ENCODE measurements at regions of chr1 and their contacts with region 1.

Region 1: DNA sequence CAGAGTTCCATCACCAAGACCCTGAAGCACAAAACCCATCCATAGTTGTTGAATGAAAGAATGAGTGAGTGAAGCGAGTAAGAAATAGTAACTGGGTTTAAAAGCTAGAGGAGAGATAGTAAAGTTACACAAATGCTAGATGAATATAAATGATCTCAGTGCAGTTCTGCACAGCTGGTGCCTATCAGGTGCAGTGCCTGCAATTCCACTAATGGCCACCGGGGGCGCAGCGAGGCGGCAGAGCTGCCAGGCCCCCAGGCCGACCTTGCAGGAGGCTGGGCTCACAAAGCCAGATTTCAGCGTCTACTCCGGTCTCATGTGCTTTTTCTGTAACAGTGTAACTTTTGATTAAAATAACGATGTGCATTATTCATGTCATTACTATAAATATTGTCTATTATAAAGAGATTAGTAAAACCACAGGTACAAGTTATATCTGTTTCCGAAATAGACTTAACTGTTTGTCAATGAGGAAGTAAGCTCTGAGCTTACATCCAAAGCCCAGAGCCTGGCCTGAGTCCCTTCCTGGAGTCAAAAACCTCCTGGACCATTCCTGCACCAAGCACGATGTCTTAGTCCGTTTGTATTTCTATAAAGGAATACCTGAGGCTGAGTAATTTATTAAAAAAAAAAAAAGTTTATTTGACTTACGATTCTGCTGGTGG is 477.6 kb downstream of the NPHP4 start:
- DNase-seq: peak; percentile 61 to 76
- ATAC-seq: peak in 4 of 8 donors; percentile 50 to 74 (median 63)
- H3K4me3 ChIP-seq: no peak overlapping the region
- H3K27ac ChIP-seq: no peak overlapping the region
- H3K4me1 ChIP-seq: no peaks in the 10 kb centered on the region
- H3K27me3 ChIP-seq: peaks cover 0 to 60% (median 36%) of the 10 kb centered on the region in 7 donors
- CTCF ChIP-seq: peak in 8 of 9 donors; percentile 98 to 100 (median 100)

Region 2: DNA sequence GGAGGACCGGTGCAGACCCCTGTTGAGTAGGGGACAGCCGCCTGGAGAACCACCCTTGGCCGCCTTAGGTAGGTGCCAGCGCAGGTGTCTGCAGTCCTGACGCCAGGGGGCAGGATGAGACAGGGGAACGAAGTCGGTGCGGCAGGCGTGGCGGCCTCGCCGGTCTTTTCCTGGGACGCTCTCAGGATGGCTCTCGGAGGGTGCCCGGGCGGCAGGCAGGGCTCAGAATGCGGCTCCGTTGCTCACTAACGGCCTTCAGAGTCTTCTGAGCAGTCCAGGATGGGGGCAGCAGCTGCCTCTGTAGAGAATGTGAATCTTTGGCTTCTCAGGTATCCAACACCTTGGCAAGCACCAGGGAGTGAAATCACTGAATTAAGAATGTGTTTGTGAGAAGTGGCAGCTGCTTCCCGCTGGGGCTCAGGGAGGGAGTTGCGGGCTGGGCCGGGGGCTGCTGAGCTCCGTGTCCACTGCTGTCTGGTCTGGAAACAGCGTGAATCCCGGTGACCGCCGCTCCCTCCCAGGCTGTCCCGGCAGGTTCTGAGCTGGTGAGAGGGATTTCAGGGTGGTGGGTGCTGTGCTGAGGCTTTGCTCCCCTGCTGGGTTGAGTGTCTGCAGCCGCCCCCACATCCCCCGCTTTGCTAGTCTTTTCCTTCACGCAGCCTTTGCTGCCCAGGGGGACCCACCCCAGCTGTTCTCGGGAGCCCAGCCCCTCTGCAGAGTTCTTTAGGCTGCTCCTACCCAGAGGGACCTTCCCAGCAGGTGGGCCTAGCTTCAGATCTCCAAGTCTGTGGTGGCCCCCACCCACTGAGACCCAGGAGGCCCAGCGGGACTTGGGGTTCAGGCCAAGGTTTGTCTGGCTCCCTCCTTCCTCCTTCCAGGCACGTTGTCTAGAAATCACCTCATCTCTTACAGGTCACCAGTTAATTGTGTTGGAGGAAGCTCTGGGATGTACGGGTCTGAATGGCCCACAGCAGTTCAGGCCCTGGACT is 1603.5 kb before region 1 on chr1:
- intact Hi-C with region 1: loop called in 1 of 10 experiments (anchors 10 kb)
- DNase-seq: peak; percentile 52 to 70
- ATAC-seq: peak in 7 of 8 donors; percentile 41 to 79 (median 72)
- H3K4me3 ChIP-seq: no peak overlapping the region
- H3K27ac ChIP-seq: no peak overlapping the region
- H3K4me1 ChIP-seq: peaks cover 0 to 5% (median 0%) of the 10 kb centered on the region in 9 donors
- H3K27me3 ChIP-seq: peaks cover 0 to 44% (median 30%) of the 10 kb centered on the region in 7 donors
- CTCF ChIP-seq: peak; percentile 34 to 75 (median 70)

Region 3: DNA sequence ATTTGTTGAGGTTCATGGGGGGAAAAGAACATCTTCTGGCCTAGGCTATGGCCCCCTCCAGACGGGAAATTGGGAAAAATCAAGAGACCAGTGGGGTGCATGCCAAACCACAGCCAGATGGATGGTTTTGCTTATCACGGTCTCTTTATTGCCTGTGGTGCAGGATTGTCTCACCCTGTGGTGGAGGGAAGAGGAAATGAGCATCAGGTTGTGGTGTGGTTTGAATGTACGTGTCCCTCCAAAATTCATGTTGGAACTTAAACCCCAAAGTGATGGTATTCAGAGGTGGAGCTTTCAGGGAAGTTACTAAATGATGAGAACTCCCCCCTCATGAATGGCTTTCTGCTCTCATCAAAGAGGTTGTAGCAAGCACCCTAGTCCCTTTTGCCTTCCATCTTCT is 48.2 kb before region 1 on chr1:
- intact Hi-C with region 1: no loop called
- DNase-seq: no peak
- ATAC-seq: no peak
- H3K4me3 ChIP-seq: no peak overlapping the region
- H3K27ac ChIP-seq: no peak overlapping the region
- H3K4me1 ChIP-seq: no peaks in the 10 kb centered on the region
- H3K27me3 ChIP-seq: peaks cover 0 to 13% (median 6%) of the 10 kb centered on the region in 7 donors
- CTCF ChIP-seq: no peak

Region 4: GRCh38 chr1:5745776-5746610 is 231.3 kb after region 1 on chr1:
- intact Hi-C with region 1: loop called (anchors 2 to 5 kb)
- DNase-seq: peak; percentile 44 to 66
- ATAC-seq: peak; percentile 56 to 91 (median 79)
- H3K4me3 ChIP-seq: no peak overlapping the region
- H3K27ac ChIP-seq: no peak overlapping the region
- H3K4me1 ChIP-seq: peaks cover 0 to 5% (median 0%) of the 10 kb centered on the region in 9 donors
- H3K27me3 ChIP-seq: peaks cover 0 to 83% (median 32%) of the 10 kb centered on the region in 7 donors
- CTCF ChIP-seq: peak; percentile 82 to 96 (median 90)

Region 5: GRCh38 chr1:5915587-5916571 is 401.2 kb after region 1 on chr1:
- intact Hi-C with region 1: loop called in 6 of 10 experiments (anchors 1 to 5 kb)
- DNase-seq: no peak
- ATAC-seq: peak in 5 of 8 donors; percentile 27 to 61 (median 53)
- H3K4me3 ChIP-seq: no peak overlapping the region
- H3K27ac ChIP-seq: no peak overlapping the region
- H3K4me1 ChIP-seq: peaks cover 0 to 6% (median 0%) of the 10 kb centered on the region in 9 donors
- H3K27me3 ChIP-seq: no peaks in the 10 kb centered on the region
- CTCF ChIP-seq: peak; percentile 27 to 74 (median 64)

Region 6: GRCh38 chr1:5975133-5975880 is 460.7 kb after region 1 on chr1:
- intact Hi-C with region 1: loop called in 3 of 10 experiments (anchors 2 to 5 kb)
- DNase-seq: no peak
- ATAC-seq: peak; percentile 64 to 93 (median 84)
- H3K4me3 ChIP-seq: no peak overlapping the region
- H3K27ac ChIP-seq: no peak overlapping the region
- H3K4me1 ChIP-seq: peaks cover 0 to 3% (median 0%) of the 10 kb centered on the region in 9 donors
- H3K27me3 ChIP-seq: no peaks in the 10 kb centered on the region
- CTCF ChIP-seq: peak; percentile 35 to 74 (median 67)

Measured in heart right ventricle (tissue), 16 donors.